ENCODE measurements at regions of chr1 and their contacts with region 1.

Region 1: DNA sequence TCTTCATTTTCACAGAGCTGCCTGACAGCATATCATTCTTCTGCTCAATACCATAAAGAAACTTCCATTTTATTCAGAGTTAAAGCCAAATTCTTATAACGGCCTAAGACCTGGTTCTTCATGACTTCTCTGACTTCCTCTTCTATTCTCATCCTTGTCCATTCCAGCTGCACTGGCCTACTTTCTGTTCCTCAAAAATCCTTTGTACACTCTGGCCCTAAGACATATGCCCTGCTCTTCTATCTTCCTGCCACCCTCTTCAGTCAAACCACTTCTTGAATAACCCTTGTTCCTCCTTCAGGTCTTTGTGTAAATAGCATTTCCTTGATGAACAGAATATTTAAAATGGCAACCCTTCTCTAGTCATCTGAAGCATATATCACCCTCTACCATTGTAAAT is 1338.7 kb upstream of the ADGRL2 start:
- DNase-seq: no peak
- ATAC-seq: no peak
- H3K4me3 ChIP-seq: no peak overlapping the region
- H3K27ac ChIP-seq: no peak overlapping the region
- H3K4me1 ChIP-seq: no peaks in the 10 kb centered on the region
- H3K27me3 ChIP-seq: no peaks in the 10 kb centered on the region
- CTCF ChIP-seq: no peak

Region 2: GRCh38 chr1:80441664-80442063 is 20.3 kb before region 1 on chr1:
- CTCF ChIA-PET with region 1: no interaction called
- POLR2A ChIA-PET with region 1: no interaction called
- intact Hi-C with region 1: no loop called
- DNase-seq: peak; percentile 21
- ATAC-seq: no peak
- H3K4me3 ChIP-seq: no peak overlapping the region
- H3K27ac ChIP-seq: no peak overlapping the region
- H3K4me1 ChIP-seq: no peaks in the 10 kb centered on the region
- H3K27me3 ChIP-seq: no peaks in the 10 kb centered on the region
- CTCF ChIP-seq: peak; percentile 22; the same call in 1 of the 2 replicates

Region 3: GRCh38 chr1:80517062-80517461 is 55.1 kb after region 1 on chr1:
- CTCF ChIA-PET with region 1: no interaction called
- POLR2A ChIA-PET with region 1: no interaction called
- intact Hi-C with region 1: no loop called
- DNase-seq: no peak
- ATAC-seq: no peak
- H3K4me3 ChIP-seq: no peak overlapping the region
- H3K27ac ChIP-seq: no peak overlapping the region
- H3K4me1 ChIP-seq: no peaks in the 10 kb centered on the region
- H3K27me3 ChIP-seq: no peaks in the 10 kb centered on the region
- CTCF ChIP-seq: no peak

Region 4: GRCh38 chr1:80656071-80656509 is 194.1 kb after region 1 on chr1:
- CTCF ChIA-PET with region 1: no interaction called
- POLR2A ChIA-PET with region 1: no interaction called
- intact Hi-C with region 1: loop called (anchors 10 kb)
- DNase-seq: peak; percentile 59
- ATAC-seq: peak; percentile 94
- H3K4me3 ChIP-seq: no peak overlapping the region
- H3K27ac ChIP-seq: peak overlapping the region; percentile 68
- H3K4me1 ChIP-seq: peaks cover 11% of the 10 kb centered on the region; the same call in 1 of the 2 replicates
- H3K27me3 ChIP-seq: no peaks in the 10 kb centered on the region
- CTCF ChIP-seq: peak; percentile 60